AG04450 (cell line): ENCODE measurements at regions of chr5 and their contacts with region 1.

Region 1: GRCh38 chr5:165616490-165617430 is 2111.3 kb downstream of the MAT2B start:
- DNase-seq: no peak
- H3K4me3 ChIP-seq: no peak overlapping the region
- H3K27ac ChIP-seq: no peak overlapping the region
- H3K27me3 ChIP-seq: no peaks in the 10 kb centered on the region
- CTCF ChIP-seq: peak; percentile 49

Region 2: DNA sequence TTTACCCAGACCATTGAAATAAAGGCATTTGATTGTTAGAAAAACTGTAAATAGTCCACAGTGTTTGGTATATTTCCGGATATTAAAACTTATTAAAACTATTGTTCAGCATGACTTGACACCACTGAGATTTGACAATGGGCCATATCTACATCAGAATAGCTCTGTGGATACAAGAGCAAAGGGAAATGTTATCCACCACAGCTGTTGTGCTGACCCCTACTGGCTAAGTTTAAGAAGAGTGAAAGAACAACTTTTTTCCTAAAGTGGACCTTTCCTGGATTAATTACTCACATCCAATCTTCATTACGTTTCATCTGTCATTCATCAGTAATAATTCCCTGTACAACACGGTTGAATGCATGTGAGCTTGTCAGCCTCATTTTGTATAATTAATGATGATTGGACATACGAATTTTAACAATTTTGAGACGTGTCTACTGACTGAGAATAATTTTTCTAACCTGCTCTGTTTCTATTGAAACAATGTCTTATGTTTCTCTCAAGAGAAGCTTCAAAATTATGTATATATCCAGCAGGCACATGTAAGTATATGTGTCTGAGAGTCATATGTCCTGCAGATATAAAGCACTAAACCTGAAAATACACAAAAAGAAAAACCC is 158.8 kb before region 1 on chr5:
- CTCF ChIA-PET with region 1: interaction called, 10 read pairs
- POLR2A ChIA-PET with region 1: no interaction called
- DNase-seq: peak; percentile 13
- H3K4me3 ChIP-seq: no peak overlapping the region
- H3K27ac ChIP-seq: no peak overlapping the region
- H3K27me3 ChIP-seq: no peaks in the 10 kb centered on the region
- CTCF ChIP-seq: peak; percentile 83